ENCODE measurements at regions of chr5 and their contacts with region 1.

Region 1: DNA sequence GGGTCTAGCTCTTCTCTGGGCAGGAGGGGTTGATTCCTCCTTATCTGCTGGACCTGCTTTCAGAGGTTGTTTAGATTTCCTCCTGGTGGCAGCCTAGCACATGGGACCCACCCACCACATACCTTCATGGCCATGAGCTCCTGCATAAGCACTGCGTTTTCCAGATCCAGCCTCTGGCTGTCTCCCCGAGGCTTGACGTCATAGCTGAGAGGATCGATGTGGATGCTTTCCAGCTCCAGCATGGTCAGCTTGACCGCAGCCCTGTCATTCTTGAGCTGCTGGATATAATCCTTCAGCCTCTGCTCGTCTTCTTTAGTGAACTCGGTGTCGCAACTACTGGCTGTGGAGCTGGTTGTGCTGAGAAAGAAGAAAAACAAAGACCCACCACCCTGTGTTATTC is 77.0 kb downstream of the DCP2 start:
- DNase-seq: no peak
- H3K4me3 ChIP-seq: no peak overlapping the region
- H3K27ac ChIP-seq: no peak overlapping the region
- H3K4me1 ChIP-seq: peaks cover 12 to 18% of the 10 kb centered on the region in 2 experiments; a peak in 3 of 4 replicates
- H3K27me3 ChIP-seq: no peaks in the 10 kb centered on the region
- CTCF ChIP-seq: no peak
- EP300 ChIP-seq: no peak
- RAD21 ChIP-seq: no peak

Region 2: DNA sequence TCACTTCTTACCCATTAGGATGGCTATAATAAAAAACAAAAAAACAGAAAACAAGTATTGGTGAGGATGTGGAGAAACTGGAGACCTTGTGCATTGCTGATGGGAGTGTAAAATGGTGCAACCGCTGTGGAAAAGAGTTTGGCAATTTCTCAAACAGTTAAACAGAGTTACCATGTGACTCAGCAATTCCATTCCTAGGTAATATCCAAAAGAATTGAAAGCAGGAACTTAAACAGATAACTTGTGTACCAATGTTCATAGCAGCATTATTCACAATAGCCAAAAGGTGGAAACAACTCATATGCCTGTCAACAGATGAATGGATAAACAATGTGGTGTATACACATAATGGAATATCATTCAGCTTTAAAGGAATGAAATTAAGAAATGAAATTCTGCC is 48.1 kb before region 1 on chr5:
- CTCF ChIA-PET with region 1: no interaction called
- POLR2A ChIA-PET with region 1: no interaction called
- DNase-seq: no peak
- H3K4me3 ChIP-seq: no peak overlapping the region
- H3K27ac ChIP-seq: no peak overlapping the region
- H3K4me1 ChIP-seq: peaks cover 0 to 15% of the 10 kb centered on the region in 2 experiments; a peak in 1 of 4 replicates
- H3K27me3 ChIP-seq: no peaks in the 10 kb centered on the region
- CTCF ChIP-seq: no peak
- EP300 ChIP-seq: no peak
- RAD21 ChIP-seq: no peak

Region 3: GRCh38 chr5:113020461-113021273 is 32.9 kb before region 1 on chr5:
- CTCF ChIA-PET with region 1: no interaction called
- POLR2A ChIA-PET with region 1: no interaction called
- DNase-seq: no peak
- H3K4me3 ChIP-seq: no peak overlapping the region
- H3K27ac ChIP-seq: peak overlapping the region in 1 of 2 experiments; percentile 30; a peak in 2 of 4 replicates
- H3K4me1 ChIP-seq: peaks cover 0 to 8% of the 10 kb centered on the region in 2 experiments; a peak in 2 of 4 replicates
- H3K27me3 ChIP-seq: no peaks in the 10 kb centered on the region
- CTCF ChIP-seq: no peak
- EP300 ChIP-seq: peak in 1 of 2 experiments; percentile 52; a peak in 1 of 4 replicates
- RAD21 ChIP-seq: no peak

Region 4: DNA sequence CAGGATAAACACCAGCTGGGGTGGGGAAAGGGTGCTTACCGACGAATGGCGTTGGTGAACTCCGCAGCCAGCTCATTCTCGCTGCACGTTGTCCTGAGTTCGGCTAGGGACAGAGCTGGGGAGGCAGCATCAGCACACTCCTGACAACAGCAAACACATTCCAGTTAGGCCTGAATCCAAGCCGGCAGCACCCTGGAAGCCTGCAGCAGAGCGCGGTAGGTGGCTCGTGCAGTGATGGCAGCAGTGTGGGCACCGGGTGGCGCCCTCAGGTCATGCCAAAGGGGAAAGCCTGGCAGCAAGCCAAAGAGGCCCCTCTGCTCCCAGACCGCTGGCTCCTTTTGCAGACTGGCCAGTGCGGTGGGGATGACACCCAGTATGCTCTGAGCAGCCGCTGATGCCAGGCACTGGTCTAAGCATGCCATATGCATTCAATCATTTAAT is 10.1 kb before region 1 on chr5:
- CTCF ChIA-PET with region 1: interaction called, 15 read pairs
- POLR2A ChIA-PET with region 1: no interaction called
- DNase-seq: peak; percentile 88
- H3K4me3 ChIP-seq: no peak overlapping the region
- H3K27ac ChIP-seq: peak overlapping the region in 1 of 2 experiments; percentile 74; a peak in 2 of 4 replicates
- H3K4me1 ChIP-seq: peaks cover 0 to 16% of the 10 kb centered on the region in 2 experiments; a peak in 2 of 4 replicates
- H3K27me3 ChIP-seq: no peaks in the 10 kb centered on the region
- CTCF ChIP-seq: peak; percentile 56
- EP300 ChIP-seq: peak in 1 of 2 experiments; percentile 61; a peak in 2 of 4 replicates
- RAD21 ChIP-seq: peak; percentile 83

Region 5: GRCh38 chr5:113302120-113302519 is 248.5 kb after region 1 on chr5:
- CTCF ChIA-PET with region 1: no interaction called
- POLR2A ChIA-PET with region 1: no interaction called
- DNase-seq: no peak
- H3K4me3 ChIP-seq: no peak overlapping the region
- H3K27ac ChIP-seq: no peak overlapping the region
- H3K4me1 ChIP-seq: no peaks in the 10 kb centered on the region
- H3K27me3 ChIP-seq: no peaks in the 10 kb centered on the region
- CTCF ChIP-seq: no peak
- EP300 ChIP-seq: no peak
- RAD21 ChIP-seq: no peak

Region 6: GRCh38 chr5:113562828-113563400 is 509.3 kb after region 1 on chr5:
- CTCF ChIA-PET with region 1: no interaction called
- POLR2A ChIA-PET with region 1: no interaction called
- DNase-seq: no peak
- H3K4me3 ChIP-seq: no peak overlapping the region
- H3K27ac ChIP-seq: no peak overlapping the region
- H3K4me1 ChIP-seq: no peaks in the 10 kb centered on the region
- H3K27me3 ChIP-seq: no peaks in the 10 kb centered on the region
- CTCF ChIP-seq: no peak
- EP300 ChIP-seq: no peak
- RAD21 ChIP-seq: no peak